Dendritic cell treated with granulocyte-macrophage colony-stimulating factor and Interleukin-4, amounts not matched to agents 40 ng/mL and 50 ng/mL, for 4 days (primary cell): ENCODE measurements at regions of chr4 and their contacts with region 1.

Region 1: GRCh38 chr4:139416073-139416673 is 37.7 kb upstream of the RAB33B start:
- H3K4me3 Mint-ChIP-seq: no peak overlapping the region
- H3K27ac Mint-ChIP-seq: no peak overlapping the region
- H3K4me1 Mint-ChIP-seq: peaks cover 28% of the 10 kb centered on the region
- H3K27me3 Mint-ChIP-seq: no peaks in the 10 kb centered on the region

Region 2: DNA sequence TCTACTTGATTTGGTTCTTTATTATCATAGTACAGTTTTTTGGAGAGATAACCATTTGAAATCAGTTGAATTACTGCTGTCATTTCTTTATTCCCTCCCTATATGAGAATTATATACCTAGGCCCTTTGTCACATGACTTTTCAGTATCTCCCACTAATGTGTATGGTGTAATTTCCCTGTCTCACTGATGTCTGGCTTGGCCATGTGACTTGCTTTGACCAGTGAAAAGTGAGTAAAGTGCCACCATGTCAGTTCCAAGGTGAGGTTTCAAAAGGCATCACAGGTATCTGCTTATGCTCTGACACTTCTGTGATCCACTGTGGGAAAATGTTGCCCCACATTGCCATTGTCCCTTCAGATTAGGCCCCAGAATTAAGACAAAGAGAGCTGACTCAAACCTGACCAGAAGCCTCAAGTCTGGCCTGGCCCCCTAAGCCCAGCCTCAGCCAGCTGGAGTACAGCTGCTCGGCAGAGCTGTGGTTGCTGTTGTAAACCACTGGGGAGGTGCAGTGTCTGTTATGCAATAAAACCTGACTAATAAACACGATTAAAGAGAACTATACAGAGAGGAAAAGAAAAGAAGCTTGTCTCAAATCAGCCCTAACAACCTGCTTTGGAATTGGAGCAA is 112.3 kb after region 1 on chr4:
- intact Hi-C with region 1: loop called (anchors 5 kb)
- H3K4me3 Mint-ChIP-seq: no peak overlapping the region
- H3K27ac Mint-ChIP-seq: no peak overlapping the region
- H3K4me1 Mint-ChIP-seq: peaks cover 46% of the 10 kb centered on the region
- H3K27me3 Mint-ChIP-seq: no peaks in the 10 kb centered on the region